Activated T-helper 2 cell treated with anti-CD3 and anti-CD28 coated beads, Interferon-gamma antibody, Interleukin-2, Interleukin-4, amounts not matched to agents 10 μg/mL and 5 μg/mL and 100 μg/mL, durations not matched to agents 14 hours and 24 hours and 36 hours (primary cell): ENCODE measurements at regions of chr14 and their contacts with region 1.

Region 1: DNA sequence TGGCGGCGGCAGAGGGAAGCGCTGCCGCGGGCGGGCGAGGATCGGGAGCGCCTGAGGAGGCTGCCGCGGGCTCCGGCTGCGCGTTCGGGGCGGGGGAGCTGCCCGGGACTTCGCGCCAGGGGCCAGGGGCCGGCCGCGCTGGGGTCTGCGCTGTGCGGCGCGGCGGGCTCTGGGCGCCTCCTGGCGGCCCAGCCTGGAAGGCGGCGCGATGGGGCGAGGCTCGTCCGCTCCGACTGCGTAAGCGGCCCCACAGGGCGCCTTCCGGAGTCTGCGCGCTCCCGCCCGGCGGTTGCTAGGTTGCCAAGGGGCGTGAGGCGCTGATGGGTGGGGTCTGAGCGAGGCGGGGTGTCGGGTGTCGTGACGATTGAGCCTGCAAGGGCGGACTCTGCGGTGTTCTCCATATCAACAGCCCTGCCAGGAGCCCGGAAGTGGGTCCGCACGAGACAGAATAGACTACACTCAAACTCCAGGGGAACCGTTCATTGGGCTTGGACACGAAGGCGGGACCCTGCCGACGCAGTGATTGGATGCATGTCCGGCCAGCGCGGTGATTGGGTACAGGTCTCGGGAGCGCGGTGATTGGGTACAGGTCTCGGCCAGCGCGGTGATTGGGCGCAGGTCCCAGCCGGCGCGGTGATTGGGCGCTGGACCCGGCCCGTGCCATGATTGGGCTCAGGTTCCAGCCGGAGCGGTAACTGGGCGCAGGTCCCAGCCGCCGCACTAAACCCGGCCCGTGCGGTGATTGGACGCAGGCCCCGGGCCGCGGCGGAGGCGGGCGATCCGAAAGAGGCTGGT is at the start of gene TEDC1:
- DNase-seq: peak; percentile 100
- H3K4me3 Mint-ChIP-seq: peak within 1 kb of the TSS; percentile 85
- H3K27ac Mint-ChIP-seq: peak within 1 kb of the TSS; percentile 90
- H3K4me1 Mint-ChIP-seq: peaks cover 12% of the 10 kb centered on the region
- H3K27me3 Mint-ChIP-seq: no peaks in the 10 kb centered on the region
- total RNA-seq, gene TEDC1: 38.2 and 42.6 TPM in 2 replicates

Region 2: DNA sequence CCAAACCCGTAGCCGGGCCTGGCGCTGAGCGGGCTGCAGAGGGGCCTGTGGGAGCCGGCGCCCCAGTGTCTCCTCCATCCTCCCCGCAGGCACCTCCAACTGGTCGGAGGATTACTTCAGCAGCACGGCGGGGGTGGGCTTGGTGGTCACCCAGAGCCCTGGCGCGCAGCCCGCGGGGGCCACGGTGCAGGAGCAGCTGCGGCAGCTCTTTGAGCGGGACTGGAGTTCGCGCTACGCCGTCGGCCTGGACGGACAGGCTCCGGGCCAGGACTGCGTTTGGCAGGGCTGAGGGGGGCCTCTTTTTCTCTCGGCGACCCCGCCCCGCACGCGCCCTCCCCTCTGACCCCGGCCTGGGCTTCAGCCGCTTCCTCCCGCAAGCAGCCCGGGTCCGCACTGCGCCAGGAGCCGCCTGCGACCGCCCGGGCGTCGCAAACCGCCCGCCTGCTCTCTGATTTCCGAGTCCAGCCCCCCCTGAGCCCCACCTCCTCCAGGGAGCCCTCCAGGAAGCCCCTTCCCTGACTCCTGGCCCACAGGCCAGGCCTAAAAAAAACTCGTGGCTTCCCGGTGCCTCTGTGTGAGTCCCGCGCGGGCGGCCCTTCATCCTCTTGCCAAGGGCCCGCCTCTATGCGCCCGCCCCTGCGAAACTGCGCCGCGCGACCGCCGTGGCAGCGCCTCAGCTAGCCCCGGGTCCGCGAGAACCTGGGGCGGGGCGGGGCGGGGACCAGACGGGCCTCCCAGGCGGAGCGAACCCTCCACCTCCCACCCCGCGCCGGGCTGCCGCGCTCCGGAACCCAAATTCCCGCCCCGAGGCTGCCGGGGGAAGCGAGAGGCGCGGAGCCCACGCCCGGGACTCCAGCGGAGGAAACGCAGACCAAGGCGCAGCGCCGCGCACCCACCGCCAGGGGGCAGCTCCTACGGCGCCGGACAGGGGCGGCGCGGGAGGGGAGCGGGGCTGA is 557.8 kb before region 1 on chr14:
- intact Hi-C with region 1: loop called (anchors 2 kb)
- DNase-seq: peak; percentile 81
- H3K4me3 Mint-ChIP-seq: peak overlapping the region; percentile 62
- H3K27ac Mint-ChIP-seq: no peak overlapping the region
- H3K4me1 Mint-ChIP-seq: peaks cover 2% of the 10 kb centered on the region
- H3K27me3 Mint-ChIP-seq: peaks cover 18% of the 10 kb centered on the region

Region 3: DNA sequence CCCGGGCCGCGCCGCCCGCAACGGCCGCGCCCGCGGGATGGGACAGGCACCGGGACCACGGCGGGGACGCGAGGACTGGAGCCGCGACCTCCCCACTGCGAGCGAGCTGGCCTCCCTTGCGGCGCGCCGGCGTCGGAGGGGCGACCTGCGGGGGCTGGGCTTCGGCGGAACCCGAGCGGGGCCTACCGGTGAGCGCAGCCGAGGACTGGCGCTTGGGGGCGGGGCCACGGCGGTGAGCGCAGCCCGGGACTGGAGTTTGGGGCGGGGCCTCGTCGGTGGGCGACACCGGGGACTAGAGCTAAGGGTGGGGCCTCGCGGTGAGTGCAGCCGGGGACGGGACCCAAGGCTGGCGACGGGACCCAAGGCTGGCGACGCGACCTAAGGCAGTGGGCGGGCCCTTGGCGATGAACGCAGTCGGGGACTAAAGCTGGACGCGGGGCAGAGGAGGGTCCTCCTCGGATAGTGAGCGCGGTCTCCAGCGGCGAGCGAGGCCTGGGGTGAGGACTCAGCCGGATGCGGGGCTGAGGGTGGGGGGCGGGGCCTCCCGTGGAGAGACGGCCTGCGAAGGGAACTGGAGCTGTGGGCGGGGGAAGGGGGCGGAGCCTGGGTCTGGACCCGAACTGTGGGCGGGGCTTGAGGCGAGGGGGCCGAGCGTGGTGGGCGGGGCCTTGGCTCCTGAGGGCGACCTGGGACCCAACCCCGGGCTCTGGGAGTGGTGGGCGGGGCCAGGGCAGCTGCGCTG is 189.8 kb before region 1 on chr14 and contains the start of gene BRF1:
- intact Hi-C with region 1: loop called (anchors 1 kb)
- DNase-seq: peak; percentile 97
- H3K4me3 Mint-ChIP-seq: peak within 1 kb of the TSS; percentile 90
- H3K27ac Mint-ChIP-seq: peak within 1 kb of the TSS; percentile 92
- H3K4me1 Mint-ChIP-seq: peaks cover 25% of the 10 kb centered on the region
- H3K27me3 Mint-ChIP-seq: no peaks in the 10 kb centered on the region
- total RNA-seq, gene BRF1: 44.0 TPM in 2 replicates

Region 4: GRCh38 chr14:105375635-105376057 is 115.1 kb before region 1 on chr14:
- intact Hi-C with region 1: loop called (anchors 1 kb)
- DNase-seq: no peak
- H3K4me3 Mint-ChIP-seq: no peak overlapping the region
- H3K27ac Mint-ChIP-seq: peak overlapping the region; percentile 77
- H3K4me1 Mint-ChIP-seq: peaks cover 10% of the 10 kb centered on the region
- H3K27me3 Mint-ChIP-seq: no peaks in the 10 kb centered on the region

Region 5: GRCh38 chr14:105414456-105415371 is 76.1 kb before region 1 on chr14:
- intact Hi-C with region 1: loop called (anchors 5 kb)
- DNase-seq: peak; percentile 56
- H3K4me3 Mint-ChIP-seq: peak overlapping the region; percentile 71
- H3K27ac Mint-ChIP-seq: no peak overlapping the region
- H3K4me1 Mint-ChIP-seq: peaks cover 7% of the 10 kb centered on the region
- H3K27me3 Mint-ChIP-seq: peaks cover 22% of the 10 kb centered on the region

Region 6: GRCh38 chr14:105527661-105528581 is 37.2 kb after region 1 on chr14:
- intact Hi-C with region 1: loop called (anchors 2 kb)
- DNase-seq: peak; percentile 75
- H3K4me3 Mint-ChIP-seq: peak overlapping the region; percentile 71
- H3K27ac Mint-ChIP-seq: no peak overlapping the region
- H3K4me1 Mint-ChIP-seq: peaks cover 2% of the 10 kb centered on the region
- H3K27me3 Mint-ChIP-seq: peaks cover 25% of the 10 kb centered on the region

Region 7: DNA sequence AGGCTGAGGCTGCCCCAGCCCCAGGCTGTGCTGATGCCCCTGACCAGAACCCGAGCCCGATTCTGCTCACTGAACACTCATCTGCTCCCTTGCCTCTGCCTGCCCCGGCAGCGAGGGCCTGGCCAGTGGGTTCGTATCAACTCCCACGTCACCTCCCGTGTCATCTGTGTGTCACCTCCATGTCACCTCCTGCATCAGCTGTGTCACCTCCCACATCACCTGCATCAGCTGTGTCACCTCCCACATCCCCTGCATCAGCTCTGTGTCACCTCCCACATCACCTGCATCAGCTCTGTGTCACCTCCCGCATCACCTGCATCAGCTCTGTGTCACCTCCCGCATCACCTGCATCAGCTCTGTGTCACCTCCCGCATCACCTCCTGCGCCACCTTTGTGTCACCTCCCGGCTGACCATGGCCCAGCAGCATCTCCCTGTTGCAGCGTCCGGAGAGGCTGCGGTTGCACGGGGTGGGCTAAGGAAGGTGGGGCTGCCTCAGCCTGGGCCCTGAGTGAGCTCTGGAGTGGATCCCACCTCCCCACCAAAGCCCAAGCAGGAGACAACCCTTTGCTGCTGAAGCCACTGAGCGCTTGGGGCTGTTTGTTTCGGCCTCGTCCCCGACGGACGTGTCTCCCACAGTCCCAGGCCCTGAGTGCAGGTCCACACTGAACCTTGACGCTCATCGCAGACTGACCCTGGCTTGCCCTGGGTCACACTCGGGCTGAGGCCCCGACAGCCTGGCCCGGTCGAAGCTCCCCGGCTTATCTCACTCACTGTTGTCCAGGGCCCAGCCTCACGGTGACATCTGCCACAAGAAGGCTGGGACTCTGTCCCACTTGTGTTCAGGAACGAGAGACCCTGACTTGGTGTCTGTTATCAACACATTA is 47.6 kb after region 1 on chr14:
- intact Hi-C with region 1: no loop called
- DNase-seq: no peak
- H3K4me3 Mint-ChIP-seq: no peak overlapping the region
- H3K27ac Mint-ChIP-seq: no peak overlapping the region
- H3K4me1 Mint-ChIP-seq: no peaks in the 10 kb centered on the region
- H3K27me3 Mint-ChIP-seq: peaks cover 11% of the 10 kb centered on the region